ENCODE measurements at regions of chr4 and their contacts with region 1.

Region 1: DNA sequence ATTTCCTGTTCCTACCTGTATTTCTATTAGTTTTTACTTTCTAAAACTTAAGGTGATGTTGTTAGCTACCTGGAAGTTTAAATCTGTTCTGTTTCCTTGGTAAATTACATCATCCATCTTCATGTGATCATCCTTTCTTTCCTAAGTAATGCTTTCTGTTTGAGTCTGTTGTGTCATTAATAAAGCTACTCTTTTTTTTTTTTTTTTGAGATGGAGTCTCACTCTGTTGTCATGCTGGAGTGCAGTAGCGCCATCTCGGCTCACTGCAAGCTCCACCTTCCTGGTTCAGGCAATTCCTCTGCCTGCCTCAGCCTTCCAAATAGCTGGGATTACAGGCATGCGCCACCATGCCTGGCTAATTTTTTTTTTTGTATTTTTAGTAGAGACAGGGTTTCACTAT is 73.3 kb downstream of the FIP1L1 start:
- DNase-seq: no peak
- H3K4me3 ChIP-seq: no peak overlapping the region
- H3K27ac ChIP-seq: no peak overlapping the region
- H3K4me1 ChIP-seq: no peaks in the 10 kb centered on the region
- H3K27me3 ChIP-seq: no peaks in the 10 kb centered on the region
- CTCF ChIP-seq: no peak

Region 2: DNA sequence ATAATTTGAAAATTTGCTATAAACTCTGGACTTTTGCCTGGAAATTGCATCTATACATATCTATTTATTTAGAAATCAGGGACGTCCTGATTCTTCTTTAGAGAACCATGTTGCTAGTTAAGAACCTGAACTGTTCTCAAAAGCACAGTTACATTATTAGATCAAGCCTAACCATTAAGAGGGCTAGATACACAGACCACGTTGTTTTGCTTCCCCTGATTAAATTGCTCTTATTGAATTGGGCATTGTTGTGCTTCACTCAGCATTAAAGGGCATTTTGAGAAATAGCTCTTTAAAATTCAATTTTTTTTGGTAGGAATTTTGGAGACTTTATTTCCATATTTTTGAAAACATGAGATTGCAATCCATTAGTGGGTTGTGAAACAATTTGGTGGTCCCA is 29.0 kb before region 1 on chr4:
- CTCF ChIA-PET with region 1: no interaction called
- POLR2A ChIA-PET with region 1: interaction called, 27 read pairs
- intact Hi-C with region 1: no loop called
- DNase-seq: no peak
- H3K4me3 ChIP-seq: no peak overlapping the region
- H3K27ac ChIP-seq: no peak overlapping the region
- H3K4me1 ChIP-seq: no peaks in the 10 kb centered on the region
- H3K27me3 ChIP-seq: no peaks in the 10 kb centered on the region
- CTCF ChIP-seq: no peak

Measured in PC-9 (cell line).